ENCODE measurements at regions of chr3 and their contacts with region 1.

Region 1: DNA sequence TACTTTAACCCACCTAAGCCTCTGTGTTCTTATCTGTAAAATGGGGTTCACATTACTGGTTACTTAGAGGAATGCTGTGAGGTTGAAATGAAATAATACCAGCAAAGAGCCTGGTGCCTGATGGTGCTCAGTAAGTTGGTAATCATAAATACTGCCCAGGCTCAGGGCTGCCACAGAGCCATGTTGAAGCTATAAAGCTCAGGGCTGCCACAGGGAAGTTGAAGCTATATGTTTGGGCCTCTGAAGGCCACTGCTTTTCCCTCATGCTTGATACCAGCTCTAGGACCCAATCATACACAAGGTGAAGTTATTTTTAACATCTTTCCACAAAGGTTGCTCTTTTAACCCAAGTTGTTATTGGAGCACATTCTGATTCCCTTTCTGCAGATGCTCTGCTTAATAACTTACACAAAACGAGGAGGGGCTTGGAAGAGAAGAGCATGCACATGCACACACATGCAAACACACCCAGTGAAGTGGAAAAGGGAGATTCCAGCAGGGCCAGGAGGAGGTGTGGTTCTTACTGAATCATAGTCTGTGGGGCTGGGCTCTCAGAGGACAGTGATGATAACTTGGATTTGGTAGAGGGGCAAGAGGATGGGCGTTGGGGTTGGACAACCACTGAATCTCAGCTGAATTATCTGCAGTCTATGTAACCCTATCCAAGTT is 17.4 kb downstream of the PARP14 start:
- DNase-seq: peak; percentile 54
- CTCF ChIP-seq: no peak

Region 2: DNA sequence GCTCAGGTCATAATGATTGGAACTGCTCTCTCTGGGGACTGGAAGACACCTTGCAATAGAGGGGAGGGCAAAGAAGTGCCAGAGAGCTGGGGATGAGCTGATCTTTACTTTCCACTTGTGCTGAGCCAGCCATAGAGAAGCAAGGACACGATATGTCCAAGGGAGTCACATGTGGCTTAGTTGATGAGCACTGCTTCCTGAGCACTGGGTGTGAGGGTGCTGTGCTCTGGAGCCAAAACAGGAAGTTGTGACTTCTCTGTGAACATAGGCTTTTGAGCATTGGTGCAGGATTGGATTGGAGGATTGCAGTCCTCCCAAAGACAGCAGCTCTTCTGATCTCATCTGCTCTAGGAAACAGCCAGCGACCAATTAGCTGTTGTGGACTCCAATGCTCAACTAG is 10.8 kb before region 1 on chr3:
- CTCF ChIA-PET with region 1: interaction called, 11 read pairs
- POLR2A ChIA-PET with region 1: no interaction called
- DNase-seq: no peak
- CTCF ChIP-seq: no peak

Region 3: DNA sequence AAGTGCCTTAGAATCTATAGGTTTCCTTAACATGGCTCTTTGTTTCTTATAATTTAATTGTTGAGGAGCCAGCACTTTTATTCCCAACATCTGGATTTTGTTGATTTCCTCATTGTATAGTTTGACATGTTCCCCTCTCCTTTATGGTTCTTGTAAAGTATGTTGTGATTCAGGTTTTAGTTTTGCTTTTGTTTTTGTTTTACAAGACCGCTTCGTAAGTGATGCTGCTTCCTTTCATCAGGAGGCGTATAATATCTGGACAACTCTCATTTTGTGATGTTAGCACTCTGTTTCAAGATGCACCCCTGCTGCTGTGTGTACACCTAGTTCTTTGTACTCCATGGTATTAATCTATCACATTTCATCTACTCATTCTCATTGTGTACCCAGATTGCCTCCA is 145.5 kb after region 1 on chr3:
- CTCF ChIA-PET with region 1: no interaction called
- POLR2A ChIA-PET with region 1: no interaction called
- DNase-seq: no peak
- CTCF ChIP-seq: no peak

Region 4: DNA sequence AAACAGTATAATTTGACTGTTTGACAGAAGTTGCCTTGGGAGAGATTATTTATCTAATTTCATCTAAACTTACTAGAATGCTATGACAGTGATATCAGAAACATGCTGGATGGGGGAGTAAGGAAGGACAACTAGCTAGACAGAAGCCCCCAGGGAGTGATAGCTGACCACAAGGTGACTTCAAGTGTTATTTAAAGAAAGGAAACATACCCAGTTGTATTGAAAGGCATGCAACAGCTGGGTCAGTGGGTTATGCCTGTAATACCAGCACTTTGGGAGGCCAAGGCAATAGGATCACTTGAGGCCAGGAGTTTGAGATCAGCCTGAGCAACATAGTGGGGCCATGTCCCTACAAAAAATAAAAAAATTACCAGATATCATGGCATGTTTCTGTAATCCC is 166.4 kb after region 1 on chr3:
- CTCF ChIA-PET with region 1: no interaction called
- POLR2A ChIA-PET with region 1: no interaction called
- DNase-seq: no peak
- CTCF ChIP-seq: no peak

Measured in GM10248 (cell line).